Body of pancreas (tissue), 4 donors: ENCODE measurements at regions of chr13 and their contacts with region 1.

Region 1: DNA sequence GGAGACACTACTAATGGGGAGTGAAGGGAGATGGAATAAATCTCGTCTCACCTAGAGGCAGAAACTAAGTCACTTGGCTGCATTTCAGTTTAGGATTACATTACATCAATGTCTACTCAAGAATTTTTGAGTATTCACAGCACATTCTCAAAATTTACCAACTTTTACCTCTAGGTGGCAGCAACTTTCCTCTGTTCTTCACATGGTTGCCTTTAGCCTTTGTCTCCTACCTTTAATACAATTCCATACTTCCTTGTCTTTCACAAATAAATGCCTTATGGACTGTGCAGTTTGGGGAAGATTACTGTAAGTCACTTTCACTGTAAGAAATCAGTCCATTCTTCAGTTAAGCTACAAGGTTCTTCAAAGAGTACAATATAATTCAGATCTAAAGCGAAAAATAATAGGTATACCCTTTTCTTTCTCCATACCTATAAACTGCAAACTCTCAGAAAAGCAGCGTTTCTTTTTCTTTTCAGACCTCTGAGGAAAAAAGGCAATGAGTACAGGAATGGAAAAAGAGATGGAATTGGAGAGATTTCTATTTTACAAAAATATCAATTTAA is 379.4 kb downstream of the KLF12 start:
- DNase-seq: peak in 3 of 4 donors; percentile 9 to 52 (median 34)
- ATAC-seq: peak; percentile 64
- H3K4me3 ChIP-seq: no peak overlapping the region
- H3K27ac ChIP-seq: no peak overlapping the region
- H3K4me1 ChIP-seq: no peaks in the 10 kb centered on the region
- H3K27me3 ChIP-seq: no peaks in the 10 kb centered on the region
- CTCF ChIP-seq: peak; percentile 30 to 75 (median 59)
- POLR2A ChIP-seq: no peak

Region 2: GRCh38 chr13:75219479-75220237 is 1464.8 kb after region 1 on chr13:
- intact Hi-C with region 1: loop called (anchors 10 kb)
- DNase-seq: peak; percentile 76 to 82 (median 78)
- ATAC-seq: peak; percentile 92
- H3K4me3 ChIP-seq: no peak overlapping the region
- H3K27ac ChIP-seq: no peak overlapping the region
- H3K4me1 ChIP-seq: no peaks in the 10 kb centered on the region
- H3K27me3 ChIP-seq: no peaks in the 10 kb centered on the region
- CTCF ChIP-seq: peak; percentile 85 to 97 (median 89)
- POLR2A ChIP-seq: no peak